MCF 10A (cell line): ENCODE measurements at regions of chr3 and their contacts with region 1.

Region 1: GRCh38 chr3:131026321-131027178 is at the starts of genes ASTE1 and NEK11:
- DNase-seq: peak; percentile 85
- H3K4me3 Mint-ChIP-seq: peak within 1 kb of the TSS; percentile 90
- H3K27ac Mint-ChIP-seq: peak within 1 kb of the TSS; percentile 99
- H3K4me1 Mint-ChIP-seq: peaks cover 8% of the 10 kb centered on the region
- H3K27me3 Mint-ChIP-seq: no peaks in the 10 kb centered on the region
- CTCF ChIP-seq: no peak
- total RNA-seq, gene ASTE1: 2.7 and 3.3 TPM in 2 replicates
- total RNA-seq, gene NEK11: 6.9 and 10.2 TPM in 2 replicates

Region 2: GRCh38 chr3:130759699-130760338 is 266.7 kb before region 1 on chr3:
- CTCF ChIA-PET with region 1: no interaction called
- POLR2A ChIA-PET with region 1: interaction called, 5 read pairs
- intact Hi-C with region 1: loop called (anchors 2 kb)
- DNase-seq: peak; percentile 71
- H3K4me3 Mint-ChIP-seq: no peak overlapping the region
- H3K27ac Mint-ChIP-seq: no peak overlapping the region
- H3K4me1 Mint-ChIP-seq: peaks cover 5% of the 10 kb centered on the region
- H3K27me3 Mint-ChIP-seq: peaks cover 11% of the 10 kb centered on the region
- CTCF ChIP-seq: peak; percentile 81

Region 3: GRCh38 chr3:131067983-131068382 is 41.4 kb after region 1 on chr3:
- CTCF ChIA-PET with region 1: no interaction called
- POLR2A ChIA-PET with region 1: no interaction called
- intact Hi-C with region 1: no loop called
- DNase-seq: no peak
- H3K4me3 Mint-ChIP-seq: no peak overlapping the region
- H3K27ac Mint-ChIP-seq: no peak overlapping the region
- H3K4me1 Mint-ChIP-seq: no peaks in the 10 kb centered on the region
- H3K27me3 Mint-ChIP-seq: no peaks in the 10 kb centered on the region
- CTCF ChIP-seq: no peak

Region 4: GRCh38 chr3:131427226-131427625 is 400.7 kb after region 1 on chr3:
- CTCF ChIA-PET with region 1: no interaction called
- POLR2A ChIA-PET with region 1: no interaction called
- intact Hi-C with region 1: no loop called
- DNase-seq: no peak
- H3K4me3 Mint-ChIP-seq: no peak overlapping the region
- H3K27ac Mint-ChIP-seq: no peak overlapping the region
- H3K4me1 Mint-ChIP-seq: no peaks in the 10 kb centered on the region
- H3K27me3 Mint-ChIP-seq: peaks cover 2% of the 10 kb centered on the region
- CTCF ChIP-seq: no peak

Region 5: DNA sequence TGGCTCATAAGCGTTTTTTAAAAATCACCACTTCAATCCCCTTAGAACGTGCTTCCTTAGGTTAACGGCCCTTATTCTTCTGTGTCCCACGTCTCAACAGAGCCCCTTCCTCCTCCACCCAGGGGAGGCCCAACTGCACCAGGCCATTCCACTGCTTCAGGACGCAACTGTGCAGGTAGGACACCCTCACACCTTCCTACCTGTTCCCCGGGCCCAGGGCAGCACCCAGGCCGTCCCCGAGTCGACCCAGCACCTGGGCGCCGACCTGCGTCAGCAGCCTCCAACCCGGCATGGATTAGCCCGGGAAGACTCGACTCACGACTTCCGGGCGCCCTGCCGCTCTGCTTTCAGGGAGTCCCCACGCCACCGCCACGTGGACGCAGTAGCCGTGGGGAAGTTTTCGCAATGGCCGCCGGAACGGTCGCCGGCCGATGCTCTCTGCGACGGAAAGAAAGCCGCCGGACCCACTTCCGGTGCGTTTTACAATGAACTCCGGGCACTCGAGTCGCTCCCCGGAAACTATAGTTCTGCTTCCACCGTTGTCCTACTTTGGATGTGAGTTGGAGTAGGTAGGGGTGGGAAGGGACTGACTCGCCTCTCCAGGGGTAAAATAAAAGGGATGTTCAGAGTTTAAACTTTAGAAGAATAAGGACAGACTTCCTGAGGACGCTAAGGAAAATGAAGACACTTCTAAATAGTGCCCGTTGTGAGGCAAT is 476.1 kb after region 1 on chr3 and contains the start of gene MRPL3:
- CTCF ChIA-PET with region 1: no interaction called
- POLR2A ChIA-PET with region 1: interaction called, 7 read pairs
- intact Hi-C with region 1: loop called (anchors 2 kb)
- DNase-seq: peak; percentile 86
- H3K4me3 Mint-ChIP-seq: peak within 1 kb of the TSS; percentile 95
- H3K27ac Mint-ChIP-seq: peak within 1 kb of the TSS; percentile 91
- H3K4me1 Mint-ChIP-seq: peaks cover 21% of the 10 kb centered on the region
- H3K27me3 Mint-ChIP-seq: no peaks in the 10 kb centered on the region
- CTCF ChIP-seq: no peak
- total RNA-seq, gene MRPL3: 138 and 179 TPM in 2 replicates